ENCODE measurements at regions of chr16 and their contacts with region 1.

Region 1: DNA sequence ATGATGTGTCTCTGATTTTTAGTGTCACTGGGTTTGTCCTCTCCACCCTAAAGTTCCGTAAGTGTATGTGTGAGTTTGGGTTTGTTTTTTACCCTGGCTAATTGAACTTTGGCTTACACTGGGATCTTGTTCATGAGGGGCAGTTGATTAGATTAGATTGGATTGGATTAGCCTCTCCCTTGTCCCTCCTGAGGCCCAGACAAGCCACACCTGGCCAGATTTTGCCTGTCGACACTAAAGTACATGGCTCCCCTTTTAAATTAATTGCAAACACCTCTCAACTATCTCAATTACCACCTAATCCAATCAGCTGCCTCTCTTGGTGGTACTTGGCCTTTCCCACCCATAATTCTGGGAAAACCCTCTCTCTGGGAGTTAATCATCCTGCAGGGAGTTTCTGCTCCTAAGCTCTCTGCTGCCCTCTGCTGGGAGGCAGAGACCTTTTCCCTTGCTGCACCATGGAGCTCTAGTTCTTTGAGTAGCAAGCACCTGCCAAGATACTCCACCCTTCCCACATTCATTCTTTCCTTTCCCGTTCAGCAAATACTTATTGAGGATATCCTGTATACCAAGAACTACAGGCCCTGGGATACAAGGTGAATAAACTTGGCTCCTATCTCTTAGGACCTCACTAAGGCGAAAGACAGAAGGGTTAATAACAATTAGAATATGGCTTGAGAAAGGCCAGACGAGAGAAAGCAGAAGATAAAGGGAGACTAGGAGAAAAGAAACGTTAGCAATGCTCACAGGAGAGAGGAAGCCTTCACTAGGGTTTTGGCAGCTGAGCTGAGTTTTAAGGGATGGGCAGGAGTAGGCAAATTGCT is 60.0 kb upstream of the MPHOSPH6 start:
- DNase-seq: peak; percentile 68 to 79 (median 72)
- ATAC-seq: peak; percentile 94
- H3K4me3 ChIP-seq: no peak overlapping the region
- H3K27ac ChIP-seq: no peak overlapping the region
- H3K4me1 ChIP-seq: no peaks in the 10 kb centered on the region
- H3K27me3 ChIP-seq: no peaks in the 10 kb centered on the region
- CTCF ChIP-seq: peak; percentile 86 to 95 (median 90)
- EP300 ChIP-seq: no peak
- POLR2A ChIP-seq: no peak
- RAD21 ChIP-seq: peak; percentile 89 to 98

Region 2: DNA sequence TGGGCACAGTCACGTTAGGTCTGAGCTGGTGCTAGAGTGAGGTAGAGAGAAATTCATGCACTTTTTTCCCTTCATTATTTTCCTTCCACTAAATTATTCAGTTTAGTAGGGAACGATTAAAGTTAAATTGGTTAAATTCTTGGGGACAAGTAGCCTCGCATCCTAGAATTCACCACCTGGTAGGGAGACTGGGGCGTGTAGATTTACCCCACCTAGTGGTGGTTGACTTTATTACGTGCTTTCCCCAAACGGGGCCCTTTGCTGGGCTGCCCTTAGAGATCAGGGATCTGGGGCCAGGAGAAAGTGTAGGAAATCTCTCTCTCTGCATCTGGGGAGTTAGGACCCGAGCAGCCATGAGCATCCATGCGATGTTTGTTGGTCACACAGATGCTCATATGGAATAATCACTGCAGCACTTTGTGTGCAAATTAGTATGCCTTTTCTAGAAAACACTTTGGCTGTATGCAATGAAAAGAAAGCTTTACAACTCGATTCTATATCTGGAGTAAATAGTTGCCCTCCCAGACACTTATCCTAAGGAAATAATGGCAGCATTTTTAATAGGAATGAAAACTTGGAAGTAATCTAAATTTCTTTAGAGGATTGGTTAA is 343.9 kb before region 1 on chr16:
- CTCF ChIA-PET with region 1: interaction called, 6 read pairs
- POLR2A ChIA-PET with region 1: no interaction called
- in situ Hi-C with region 1: no loop called
- intact Hi-C with region 1: loop called (anchors 1 kb)
- DNase-seq: peak; percentile 68 to 86 (median 82)
- ATAC-seq: peak; percentile 91
- H3K4me3 ChIP-seq: no peak overlapping the region
- H3K27ac ChIP-seq: no peak overlapping the region
- H3K4me1 ChIP-seq: peaks cover 5 to 6% of the 10 kb centered on the region in 2 experiments
- H3K27me3 ChIP-seq: peaks cover 25 to 52% of the 10 kb centered on the region in 2 experiments
- CTCF ChIP-seq: peak; percentile 80 to 88 (median 87)
- EP300 ChIP-seq: no peak
- POLR2A ChIP-seq: no peak
- RAD21 ChIP-seq: peak; percentile 33 to 64

Region 3: GRCh38 chr16:82031116-82032084 is 198.6 kb before region 1 on chr16:
- CTCF ChIA-PET with region 1: interaction called, 17 read pairs
- POLR2A ChIA-PET with region 1: no interaction called
- in situ Hi-C with region 1: no loop called
- intact Hi-C with region 1: loop called (anchors 1 kb)
- DNase-seq: peak; percentile 18 to 45 (median 32)
- ATAC-seq: peak; percentile 47; the same call in 1 of the 3 replicates
- H3K4me3 ChIP-seq: no peak overlapping the region
- H3K27ac ChIP-seq: no peak overlapping the region
- H3K4me1 ChIP-seq: no peaks in the 10 kb centered on the region
- H3K27me3 ChIP-seq: no peaks in the 10 kb centered on the region; a peak in 3 of 5 replicates
- CTCF ChIP-seq: peak; percentile 34 to 72 (median 50); a peak in 4 of 6 replicates
- EP300 ChIP-seq: no peak
- POLR2A ChIP-seq: no peak
- RAD21 ChIP-seq: peak; percentile 77 to 86

Region 4: DNA sequence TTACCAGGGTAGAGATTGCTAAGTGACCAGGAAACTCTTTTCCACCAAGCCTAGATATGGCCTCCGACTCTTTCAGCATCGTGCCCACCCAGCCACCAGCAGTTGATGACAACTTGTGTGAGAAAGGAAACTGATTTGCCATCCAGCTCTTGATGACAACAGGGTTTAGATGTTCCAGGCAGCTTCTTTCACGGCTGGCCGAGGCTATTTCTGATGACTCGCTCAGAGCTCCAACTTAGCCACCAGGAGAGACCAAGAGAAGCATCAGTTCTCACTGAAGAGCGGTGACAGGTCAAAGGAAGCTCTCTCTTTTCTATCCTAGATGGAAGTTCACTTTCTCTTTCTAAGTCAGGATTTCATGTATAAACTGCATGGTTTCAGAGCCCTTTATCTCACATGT is 121.2 kb before region 1 on chr16:
- CTCF ChIA-PET with region 1: no interaction called
- POLR2A ChIA-PET with region 1: no interaction called
- in situ Hi-C with region 1: no loop called
- intact Hi-C with region 1: loop called (anchors 10 kb)
- DNase-seq: no peak
- ATAC-seq: no peak
- H3K4me3 ChIP-seq: no peak overlapping the region
- H3K27ac ChIP-seq: no peak overlapping the region
- H3K4me1 ChIP-seq: no peaks in the 10 kb centered on the region
- H3K27me3 ChIP-seq: peaks cover 16 to 26% of the 10 kb centered on the region in 2 experiments
- CTCF ChIP-seq: no peak
- EP300 ChIP-seq: no peak
- POLR2A ChIP-seq: no peak
- RAD21 ChIP-seq: no peak

Measured in K562 (cell line).